ENCODE measurements at regions of chr12 and their contacts with region 1.

Region 1: GRCh38 chr12:111942557-111942956 is 70.4 kb downstream of the TMEM116 start:
- DNase-seq: no peak
- ATAC-seq: no peak

Region 2: DNA sequence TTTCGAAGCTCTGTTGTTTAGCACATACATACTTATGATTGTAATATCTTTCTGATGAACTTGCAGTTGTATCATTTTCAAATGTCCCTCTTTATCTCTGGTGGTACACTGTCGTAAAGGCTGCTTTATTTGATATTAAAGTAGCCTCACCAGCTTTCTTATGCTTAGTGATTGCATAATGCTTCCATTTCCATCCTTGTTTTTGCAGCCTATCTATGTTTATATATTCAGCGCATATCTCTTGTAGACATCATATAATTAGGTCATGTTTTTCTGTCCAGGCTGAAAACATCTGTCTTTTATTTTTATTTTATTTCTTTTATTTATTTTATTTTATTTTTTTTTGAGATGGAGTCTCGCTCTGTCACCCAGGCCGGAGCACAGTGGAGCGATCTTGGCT is 222.1 kb before region 1 on chr12:
- intact Hi-C with region 1: no loop called
- DNase-seq: no peak
- ATAC-seq: no peak

Region 3: DNA sequence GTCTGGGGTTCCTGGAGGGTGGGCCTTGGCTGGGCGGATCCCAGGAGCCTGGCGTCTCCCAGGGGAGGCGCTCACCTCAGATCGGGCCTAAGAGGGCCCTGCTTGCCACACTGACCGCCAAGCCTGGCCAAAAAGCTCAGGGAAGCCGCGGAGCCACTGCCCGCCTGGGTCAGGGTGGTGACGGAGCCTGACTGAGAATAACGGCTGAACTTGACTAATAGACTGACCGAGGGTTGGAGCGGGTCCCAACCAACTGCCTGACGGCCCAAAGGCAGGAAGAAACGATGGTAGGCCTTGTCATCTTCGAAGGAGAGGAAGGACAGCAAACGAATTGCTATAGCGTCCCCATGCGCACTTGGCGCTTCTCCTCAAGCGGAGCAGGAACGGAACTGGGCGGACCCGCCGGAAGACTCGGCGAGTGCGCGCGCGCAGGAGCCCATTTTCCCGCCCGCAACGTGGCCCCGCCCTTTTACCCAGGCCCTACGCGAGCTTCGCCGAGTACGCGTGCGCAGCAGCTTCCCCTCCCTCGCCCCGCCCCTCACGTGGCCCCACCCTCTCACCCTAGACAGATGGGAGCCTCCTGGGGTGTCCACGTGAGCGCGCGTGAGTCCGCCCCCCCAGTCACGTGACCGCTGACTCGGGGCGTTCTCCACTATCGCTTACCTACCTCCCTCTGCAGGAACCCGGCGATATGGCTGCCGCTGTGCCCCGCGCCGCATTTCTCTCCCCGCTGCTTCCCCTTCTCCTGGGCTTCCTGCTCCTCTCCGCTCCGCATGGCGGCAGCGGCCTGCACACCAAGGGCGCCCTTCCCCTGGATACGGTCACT is 70.4 kb after region 1 on chr12 and contains the starts of genes ERP29 and TMEM116:
- intact Hi-C with region 1: loop called in 1 of 2 experiments (anchors 5 kb)
- DNase-seq: peak; percentile 100
- ATAC-seq: peak; percentile 95 to 96
- total RNA-seq, gene ERP29: 42.2 to 52.3 TPM
- total RNA-seq, gene TMEM116: 11.8 to 18.8 TPM

Measured in left cardiac atrium (tissue), 4 donors.